PC-9 (cell line): ENCODE measurements at regions of chr16 and their contacts with region 1.

Region 1: DNA sequence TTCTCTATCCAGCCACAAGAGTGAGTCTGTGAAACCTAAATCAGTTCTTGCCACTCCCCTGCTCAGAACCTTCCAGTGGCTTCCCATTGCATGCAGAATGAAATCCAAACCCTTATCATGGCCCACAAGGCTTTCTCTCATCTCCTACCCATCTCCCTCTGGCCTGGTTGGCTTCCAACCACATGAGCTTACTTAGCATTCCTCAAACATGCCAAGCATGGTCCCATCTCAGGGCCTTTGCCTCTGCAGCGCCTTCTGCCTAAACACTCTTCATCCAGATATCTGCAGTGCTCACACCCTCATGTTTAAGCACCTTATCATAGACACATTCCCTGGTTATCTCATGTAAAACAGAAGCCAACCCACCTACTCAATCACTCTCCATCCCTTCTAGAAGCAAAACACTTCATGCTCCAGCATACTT is 15.5 kb downstream of the TK2 start:
- DNase-seq: no peak
- H3K4me3 ChIP-seq: no peak overlapping the region
- H3K27ac ChIP-seq: no peak overlapping the region
- H3K4me1 ChIP-seq: no peaks in the 10 kb centered on the region
- H3K27me3 ChIP-seq: no peaks in the 10 kb centered on the region
- CTCF ChIP-seq: no peak

Region 2: GRCh38 chr16:66107661-66108060 is 426.7 kb before region 1 on chr16:
- CTCF ChIA-PET with region 1: no interaction called
- POLR2A ChIA-PET with region 1: no interaction called
- intact Hi-C with region 1: no loop called
- DNase-seq: no peak
- H3K4me3 ChIP-seq: no peak overlapping the region
- H3K27ac ChIP-seq: no peak overlapping the region
- H3K4me1 ChIP-seq: no peaks in the 10 kb centered on the region
- H3K27me3 ChIP-seq: peaks cover 75% of the 10 kb centered on the region
- CTCF ChIP-seq: no peak

Region 3: GRCh38 chr16:66434619-66435430 is 99.6 kb before region 1 on chr16:
- CTCF ChIA-PET with region 1: no interaction called
- POLR2A ChIA-PET with region 1: interaction called, 11 read pairs
- intact Hi-C with region 1: no loop called
- DNase-seq: peak in 1 of 2 experiments; percentile 56
- H3K4me3 ChIP-seq: no peak overlapping the region
- H3K27ac ChIP-seq: no peak overlapping the region
- H3K4me1 ChIP-seq: peaks cover 31% of the 10 kb centered on the region
- H3K27me3 ChIP-seq: no peaks in the 10 kb centered on the region
- CTCF ChIP-seq: no peak

Region 4: GRCh38 chr16:66446737-66447136 is 87.7 kb before region 1 on chr16:
- CTCF ChIA-PET with region 1: no interaction called
- POLR2A ChIA-PET with region 1: no interaction called
- intact Hi-C with region 1: no loop called
- DNase-seq: peak; percentile 21 to 73
- H3K4me3 ChIP-seq: no peak overlapping the region
- H3K27ac ChIP-seq: no peak overlapping the region
- H3K4me1 ChIP-seq: peaks cover 9% of the 10 kb centered on the region; the same call in 1 of the 2 replicates
- H3K27me3 ChIP-seq: no peaks in the 10 kb centered on the region
- CTCF ChIP-seq: no peak

Region 5: GRCh38 chr16:66554021-66554420 is 19.6 kb after region 1 on chr16:
- CTCF ChIA-PET with region 1: no interaction called
- POLR2A ChIA-PET with region 1: no interaction called
- intact Hi-C with region 1: no loop called
- DNase-seq: no peak
- H3K4me3 ChIP-seq: peak overlapping the region; percentile 66; the same call in 1 of the 2 replicates
- H3K27ac ChIP-seq: no peak overlapping the region
- H3K4me1 ChIP-seq: peaks cover 30% of the 10 kb centered on the region
- H3K27me3 ChIP-seq: no peaks in the 10 kb centered on the region
- CTCF ChIP-seq: no peak